Activated CD8-positive, alpha-beta T cell treated with anti-CD3 and anti-CD28 coated beads for 36 hours (primary cell): ENCODE measurements at regions of chr1 and their contacts with region 1.

Region 1: GRCh38 chr1:39609618-39610331 is 29.7 kb downstream of the HEYL start:
- DNase-seq: peak; percentile 81
- ATAC-seq: peak; percentile 91
- H3K4me3 Mint-ChIP-seq: no peak overlapping the region
- H3K27ac Mint-ChIP-seq: no peak overlapping the region
- H3K4me1 Mint-ChIP-seq: no peaks in the 10 kb centered on the region
- H3K27me3 Mint-ChIP-seq: peaks cover 9% of the 10 kb centered on the region
- CTCF ChIP-seq: peak; percentile 78

Region 2: GRCh38 chr1:39639305-39640130 is 29.7 kb after region 1 on chr1 and contains the start of gene HEYL:
- CTCF ChIA-PET with region 1: interaction called, 10 read pairs
- POLR2A ChIA-PET with region 1: no interaction called
- intact Hi-C with region 1: no loop called
- DNase-seq: peak; percentile 72
- ATAC-seq: peak; percentile 96
- H3K4me3 Mint-ChIP-seq: peak within 1 kb of the TSS; percentile 48
- H3K27ac Mint-ChIP-seq: no peak within 1 kb of the TSS
- H3K4me1 Mint-ChIP-seq: peaks cover 6% of the 10 kb centered on the region
- H3K27me3 Mint-ChIP-seq: peaks cover 37% of the 10 kb centered on the region
- CTCF ChIP-seq: no peak
- total RNA-seq, gene HEYL: 0.07 TPM in 1 of 2 experiments, not detected in the other

Region 3: DNA sequence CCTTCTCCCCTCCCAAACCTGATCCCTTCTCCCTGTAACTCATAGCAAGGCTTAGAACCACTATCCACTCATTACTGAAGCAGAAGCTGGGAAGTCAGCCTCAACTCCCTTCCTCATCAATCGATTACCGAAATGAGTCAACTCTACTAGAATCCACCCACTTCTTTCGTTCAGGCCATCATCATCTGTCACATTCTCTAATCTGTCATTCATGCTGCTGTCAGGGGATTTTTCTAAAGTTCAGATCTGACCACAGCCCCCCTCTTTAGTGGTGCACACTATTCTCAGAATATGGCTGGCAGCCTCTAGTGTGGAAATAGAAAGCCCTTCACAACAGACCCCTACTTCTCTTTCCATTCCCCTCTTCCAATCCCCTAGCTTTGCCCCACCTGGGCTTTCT is 57.0 kb after region 1 on chr1:
- CTCF ChIA-PET with region 1: interaction called, 329 read pairs
- POLR2A ChIA-PET with region 1: no interaction called
- intact Hi-C with region 1: no loop called
- DNase-seq: peak; percentile 87
- ATAC-seq: peak; percentile 94
- H3K4me3 Mint-ChIP-seq: no peak overlapping the region
- H3K27ac Mint-ChIP-seq: peak overlapping the region; percentile 53
- H3K4me1 Mint-ChIP-seq: peaks cover 26% of the 10 kb centered on the region
- H3K27me3 Mint-ChIP-seq: peaks cover 27% of the 10 kb centered on the region
- CTCF ChIP-seq: no peak

Region 4: GRCh38 chr1:39680751-39681150 is 71.0 kb after region 1 on chr1:
- CTCF ChIA-PET with region 1: interaction called, 10 read pairs
- POLR2A ChIA-PET with region 1: interaction called, 3 read pairs
- intact Hi-C with region 1: no loop called
- DNase-seq: no peak
- ATAC-seq: no peak
- H3K4me3 Mint-ChIP-seq: no peak overlapping the region
- H3K27ac Mint-ChIP-seq: no peak overlapping the region
- H3K4me1 Mint-ChIP-seq: peaks cover 18% of the 10 kb centered on the region
- H3K27me3 Mint-ChIP-seq: peaks cover 11% of the 10 kb centered on the region
- CTCF ChIP-seq: no peak

Region 5: GRCh38 chr1:39726600-39726999 is 116.8 kb after region 1 on chr1:
- CTCF ChIA-PET with region 1: interaction called, 58 read pairs
- POLR2A ChIA-PET with region 1: no interaction called
- intact Hi-C with region 1: loop called (anchors 5 kb)
- DNase-seq: no peak
- ATAC-seq: no peak
- H3K4me3 Mint-ChIP-seq: no peak overlapping the region
- H3K27ac Mint-ChIP-seq: no peak overlapping the region
- H3K4me1 Mint-ChIP-seq: peaks cover 9% of the 10 kb centered on the region
- H3K27me3 Mint-ChIP-seq: peaks cover 58% of the 10 kb centered on the region
- CTCF ChIP-seq: no peak

Region 6: GRCh38 chr1:39799770-39800470 is 190.1 kb after region 1 on chr1:
- CTCF ChIA-PET with region 1: interaction called, 26 read pairs
- POLR2A ChIA-PET with region 1: no interaction called
- intact Hi-C with region 1: loop called (anchors 5 kb)
- DNase-seq: peak; percentile 75
- ATAC-seq: peak; percentile 74
- H3K4me3 Mint-ChIP-seq: peak overlapping the region; percentile 48
- H3K27ac Mint-ChIP-seq: peak overlapping the region; percentile 81
- H3K4me1 Mint-ChIP-seq: peaks cover 8% of the 10 kb centered on the region
- H3K27me3 Mint-ChIP-seq: no peaks in the 10 kb centered on the region
- CTCF ChIP-seq: peak; percentile 96